Head of caudate nucleus (tissue), 42 donors: ENCODE measurements at regions of chr17 and their contacts with region 1.

Region 1: GRCh38 chr17:1716076-1716995 is 6.2 kb upstream of the TLCD2 start:
- DNase-seq: peak; percentile 99 to 100 (median 100)

Region 2: DNA sequence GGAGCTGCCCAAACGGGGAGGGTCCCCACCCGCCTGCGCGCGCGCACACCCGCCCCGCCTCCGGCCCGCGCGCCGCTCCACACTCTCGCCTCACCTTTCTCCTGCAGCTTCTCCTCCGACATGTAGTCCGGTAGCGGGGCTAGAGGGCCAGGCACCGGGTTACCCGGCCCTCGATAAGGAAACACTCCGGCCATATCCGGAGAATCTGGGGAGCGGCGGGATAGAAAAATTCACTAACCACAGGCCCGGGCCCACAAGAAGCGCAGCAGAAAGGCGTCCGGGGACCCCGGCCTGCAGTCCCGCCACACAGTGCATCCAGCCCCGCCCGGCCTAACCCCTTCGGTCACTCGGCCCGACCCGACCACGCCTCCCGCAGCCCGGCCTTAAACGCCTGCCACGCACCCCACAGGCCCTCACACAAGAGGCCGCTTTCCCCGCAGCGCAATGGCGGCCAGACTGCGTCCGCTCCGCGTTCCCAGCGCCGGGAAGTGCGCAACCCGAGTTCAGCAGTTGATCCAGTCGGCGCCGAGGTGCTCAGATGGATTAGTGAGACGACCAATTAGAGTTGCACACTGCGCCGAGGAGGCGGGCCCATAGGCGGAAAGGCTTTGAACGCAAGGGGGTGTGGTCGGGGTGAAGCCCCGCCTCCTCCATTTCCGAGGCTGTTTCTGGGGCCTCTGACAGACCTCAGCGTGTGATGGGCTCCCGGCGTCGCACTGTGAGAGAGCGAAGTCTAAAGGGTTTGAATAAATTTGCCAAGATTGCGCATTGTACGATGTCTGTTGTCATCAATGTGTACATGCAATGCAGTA is 31.8 kb before region 1 on chr17 and contains the start of gene PRPF8:
- intact Hi-C with region 1: loop called (anchors 2 kb)
- DNase-seq: peak; percentile 94 to 99 (median 98)

Region 3: GRCh38 chr17:2041561-2042366 is 325.4 kb after region 1 on chr17 and contains the start of gene OVCA2:
- intact Hi-C with region 1: loop called (anchors 10 kb)
- DNase-seq: peak; percentile 86 to 98 (median 96)